ENCODE measurements at regions of chr10 and their contacts with region 1.

Region 1: DNA sequence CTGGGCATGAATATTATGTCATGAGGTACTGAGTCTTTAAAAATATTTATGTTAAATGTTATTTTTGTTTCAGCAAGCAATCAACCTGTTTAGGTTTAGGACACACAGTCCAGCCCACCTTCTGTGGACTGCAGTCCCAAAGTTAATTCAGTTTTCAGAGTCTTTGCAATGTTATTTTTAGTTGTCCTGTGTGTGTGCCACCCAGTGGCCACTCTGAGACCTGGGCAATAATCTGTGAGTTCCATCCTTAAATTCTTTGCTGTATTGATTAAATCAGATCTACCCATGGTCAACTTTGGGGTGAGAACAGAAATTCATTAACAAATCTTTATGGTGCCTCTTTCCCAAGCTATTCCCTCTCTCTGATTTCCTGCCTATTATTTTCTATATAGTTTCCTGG is 415.1 kb downstream of the CCSER2 start:
- DNase-seq: no peak
- ATAC-seq: no peak
- H3K4me3 ChIP-seq: no peak overlapping the region
- H3K27ac ChIP-seq: no peak overlapping the region
- H3K4me1 ChIP-seq: no peaks in the 10 kb centered on the region
- H3K27me3 ChIP-seq: no peaks in the 10 kb centered on the region
- CTCF ChIP-seq: peak in 7 of 9 donors; percentile 28 to 41 (median 36)

Region 2: GRCh38 chr10:84613336-84614021 is 130.0 kb before region 1 on chr10:
- intact Hi-C with region 1: loop called in 4 of 10 experiments (anchors 2 to 10 kb)
- DNase-seq: peak in 1 of 2 donors; percentile 9
- ATAC-seq: peak; percentile 61 to 95 (median 86)
- H3K4me3 ChIP-seq: no peak overlapping the region
- H3K27ac ChIP-seq: no peak overlapping the region
- H3K4me1 ChIP-seq: no peaks in the 10 kb centered on the region
- H3K27me3 ChIP-seq: peaks cover 0 to 8% (median 0%) of the 10 kb centered on the region in 7 donors
- CTCF ChIP-seq: peak; percentile 12 to 57 (median 49)

Region 3: DNA sequence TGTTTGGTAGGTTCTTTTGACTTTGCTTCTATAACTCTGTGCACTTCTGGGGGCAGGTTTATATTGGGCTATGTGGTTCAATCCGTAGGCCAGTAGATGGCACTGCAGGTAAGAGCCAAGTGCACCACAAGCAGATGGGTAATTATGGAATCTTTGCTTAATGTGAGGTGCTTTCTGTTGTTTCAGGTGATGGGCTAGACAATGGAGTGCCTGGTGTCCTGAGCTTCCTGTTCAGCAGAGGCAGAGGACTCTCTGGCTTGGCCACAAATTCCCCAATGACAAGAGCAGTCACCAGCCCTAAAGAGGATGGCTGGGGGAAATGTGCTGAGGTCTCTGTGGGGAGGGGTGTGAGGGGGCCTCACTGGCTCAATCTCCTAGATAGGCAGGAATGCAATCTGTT is 39.9 kb after region 1 on chr10:
- intact Hi-C with region 1: no loop called
- DNase-seq: peak in 1 of 2 donors; percentile 15
- ATAC-seq: peak in 5 of 8 donors; percentile 70 to 79 (median 74)
- H3K4me3 ChIP-seq: no peak overlapping the region
- H3K27ac ChIP-seq: no peak overlapping the region
- H3K4me1 ChIP-seq: no peaks in the 10 kb centered on the region
- H3K27me3 ChIP-seq: no peaks in the 10 kb centered on the region
- CTCF ChIP-seq: peak; percentile 32 to 64 (median 57)

Measured in heart right ventricle (tissue), 16 donors.